Ascending aorta (tissue), 2 donors: ENCODE measurements at regions of chr6 and their contacts with region 1.

Region 1: DNA sequence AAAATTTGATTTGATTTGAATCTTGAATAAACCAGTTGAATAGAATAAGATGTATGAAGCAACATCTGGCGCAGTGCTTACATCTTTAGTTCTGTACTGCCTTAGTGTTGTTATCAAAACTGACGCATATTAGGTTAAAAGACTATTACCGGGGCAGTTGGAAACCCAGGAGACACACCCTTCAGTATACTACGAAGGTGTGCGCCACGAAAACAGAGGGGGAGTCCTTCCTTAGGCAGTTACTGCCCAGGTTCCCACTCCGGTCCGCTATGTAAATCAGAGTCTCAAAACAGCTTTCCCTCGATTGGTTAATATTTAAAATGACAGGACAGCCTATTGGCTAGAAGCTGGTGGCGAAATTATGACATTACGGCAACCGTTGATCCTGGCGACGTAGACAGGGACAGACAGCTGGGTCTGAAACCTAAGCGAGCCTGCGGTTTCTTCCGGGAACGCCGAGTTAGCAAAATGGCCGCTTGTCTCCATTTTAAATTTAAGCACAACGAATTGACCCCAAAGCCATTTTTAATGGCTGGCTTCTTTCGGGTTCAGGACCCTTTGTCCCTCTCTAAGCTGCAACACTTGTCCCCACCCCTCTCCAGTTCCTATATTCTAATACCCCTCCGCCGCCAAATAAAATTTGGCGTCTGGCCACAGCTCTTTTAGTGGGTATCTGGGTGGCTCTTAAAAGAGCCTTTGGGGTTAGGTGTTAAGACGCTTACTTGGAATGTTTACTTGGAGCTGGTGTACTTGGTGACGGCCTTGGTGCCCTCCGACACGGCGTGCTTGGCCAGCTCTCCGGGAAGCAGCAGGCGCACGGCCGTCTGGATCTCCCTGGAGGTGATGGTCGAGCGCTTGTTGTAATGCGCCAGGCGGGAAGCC is 35.8 kb downstream of the HFE start:
- DNase-seq: peak; percentile 88 to 98
- H3K4me3 ChIP-seq: peak overlapping the region; percentile 72 to 95
- H3K27ac ChIP-seq: peak overlapping the region; percentile 90 to 98
- H3K4me1 ChIP-seq: peaks cover 0 to 16% of the 10 kb centered on the region in 2 donors
- H3K27me3 ChIP-seq: no peaks in the 10 kb centered on the region
- CTCF ChIP-seq: no peak

Region 2: GRCh38 chr6:26045065-26045927 is 77.7 kb before region 1 on chr6:
- intact Hi-C with region 1: loop called (anchors 2 kb)
- DNase-seq: peak; percentile 55 to 91
- H3K4me3 ChIP-seq: peak overlapping the region; percentile 67 to 75
- H3K27ac ChIP-seq: peak overlapping the region; percentile 90 to 97
- H3K4me1 ChIP-seq: peaks cover 0 to 8% of the 10 kb centered on the region in 2 donors
- H3K27me3 ChIP-seq: no peaks in the 10 kb centered on the region
- CTCF ChIP-seq: no peak

Region 3: DNA sequence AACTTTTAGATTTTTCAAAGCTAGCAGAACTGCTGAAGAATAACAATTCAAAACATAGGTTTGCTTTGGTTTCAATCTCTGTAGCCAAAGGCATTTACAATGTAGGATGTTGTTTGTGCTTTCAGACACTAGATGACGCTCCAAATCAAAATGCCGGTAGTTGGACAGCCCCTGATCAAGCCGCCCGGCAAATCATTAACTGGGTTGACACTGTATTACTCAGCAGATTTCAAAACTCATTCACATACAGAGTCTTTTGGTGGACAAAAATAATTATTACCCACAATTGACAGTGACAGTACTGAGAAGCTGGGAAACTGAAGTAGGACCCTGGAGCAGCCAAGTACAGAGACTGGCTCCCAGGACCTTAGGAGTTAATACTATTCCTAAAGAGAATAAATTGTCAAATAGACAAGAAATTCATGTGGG is 57.1 kb before region 1 on chr6:
- intact Hi-C with region 1: no loop called
- DNase-seq: peak in 1 of 2 donors; percentile 78
- H3K4me3 ChIP-seq: peak overlapping the region in 1 of 2 donors; percentile 24
- H3K27ac ChIP-seq: no peak overlapping the region
- H3K4me1 ChIP-seq: no peaks in the 10 kb centered on the region
- H3K27me3 ChIP-seq: no peaks in the 10 kb centered on the region
- CTCF ChIP-seq: peak; percentile 83 to 89 (median 87)

Region 4: DNA sequence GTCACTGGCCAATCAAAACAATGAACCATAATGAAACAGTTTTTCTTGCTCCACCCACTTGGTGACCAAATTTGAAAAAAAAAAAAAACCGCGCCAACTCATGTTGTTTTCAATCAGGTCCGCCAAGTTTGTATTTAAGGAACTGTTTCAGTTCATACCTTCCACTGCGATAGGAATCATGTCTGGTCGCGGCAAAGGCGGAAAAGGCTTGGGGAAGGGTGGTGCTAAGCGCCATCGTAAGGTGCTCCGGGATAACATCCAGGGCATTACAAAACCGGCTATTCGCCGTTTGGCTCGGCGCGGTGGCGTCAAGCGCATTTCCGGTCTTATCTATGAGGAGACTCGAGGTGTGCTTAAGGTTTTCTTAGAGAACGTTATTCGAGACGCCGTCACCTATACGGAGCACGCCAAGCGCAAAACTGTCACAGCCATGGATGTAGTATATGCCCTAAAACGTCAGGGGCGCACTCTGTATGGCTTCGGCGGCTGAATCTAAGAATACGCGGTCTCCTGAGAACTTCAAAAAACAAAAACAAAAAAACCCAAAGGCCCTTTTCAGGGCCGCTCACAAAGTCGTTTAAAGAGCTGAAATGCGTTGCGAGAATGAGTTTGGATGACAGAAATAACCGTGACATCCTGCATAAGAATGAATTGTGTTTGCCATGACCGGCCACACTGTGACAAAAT is 19.1 kb before region 1 on chr6:
- intact Hi-C with region 1: loop called (anchors 1 kb)
- DNase-seq: peak; percentile 68 to 94
- H3K4me3 ChIP-seq: peak overlapping the region; percentile 67 to 79
- H3K27ac ChIP-seq: peak overlapping the region; percentile 93 to 95
- H3K4me1 ChIP-seq: peaks cover 0 to 13% of the 10 kb centered on the region in 2 donors
- H3K27me3 ChIP-seq: no peaks in the 10 kb centered on the region
- CTCF ChIP-seq: peak; percentile 13 to 53 (median 51)

Region 5: GRCh38 chr6:26175428-26176181 is 52.6 kb after region 1 on chr6:
- intact Hi-C with region 1: loop called (anchors 5 kb)
- DNase-seq: no peak
- H3K4me3 ChIP-seq: no peak overlapping the region
- H3K27ac ChIP-seq: no peak overlapping the region
- H3K4me1 ChIP-seq: peaks cover 0 to 2% of the 10 kb centered on the region in 2 donors
- H3K27me3 ChIP-seq: no peaks in the 10 kb centered on the region
- CTCF ChIP-seq: peak; percentile 35 to 78 (median 49)

Region 6: DNA sequence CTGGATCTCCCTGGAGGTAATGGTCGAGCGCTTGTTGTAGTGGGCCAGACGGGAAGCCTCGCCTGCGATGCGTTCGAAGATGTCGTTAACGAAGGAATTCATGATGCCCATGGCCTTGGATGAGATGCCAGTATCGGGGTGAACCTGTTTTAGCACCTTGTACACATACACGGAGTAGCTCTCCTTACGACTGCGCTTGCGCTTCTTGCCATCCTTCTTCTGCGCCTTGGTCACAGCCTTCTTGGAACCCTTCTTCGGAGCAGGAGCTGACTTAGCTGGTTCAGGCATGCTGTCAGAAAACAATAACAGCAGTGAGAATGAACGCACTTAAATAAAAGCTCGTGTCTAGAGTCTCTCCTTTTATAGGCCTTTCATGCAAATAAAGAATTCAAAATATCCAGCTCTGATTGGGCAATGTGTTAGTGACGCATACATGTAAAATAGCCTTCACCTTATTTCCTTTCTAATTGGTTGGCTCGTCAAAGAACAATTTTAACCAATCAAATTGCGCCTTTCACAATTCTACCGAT is 93.4 kb after region 1 on chr6:
- intact Hi-C with region 1: loop called (anchors 2 kb)
- DNase-seq: peak in 1 of 2 donors; percentile 89
- H3K4me3 ChIP-seq: peak overlapping the region; percentile 55 to 64
- H3K27ac ChIP-seq: peak overlapping the region; percentile 90
- H3K4me1 ChIP-seq: peaks cover 0 to 11% of the 10 kb centered on the region in 2 donors
- H3K27me3 ChIP-seq: no peaks in the 10 kb centered on the region
- CTCF ChIP-seq: no peak

Region 7: GRCh38 chr6:26473758-26474438 is 350.9 kb after region 1 on chr6:
- intact Hi-C with region 1: no loop called
- DNase-seq: peak; percentile 68 to 92
- H3K4me3 ChIP-seq: peak overlapping the region; percentile 57 to 64
- H3K27ac ChIP-seq: peak overlapping the region; percentile 91
- H3K4me1 ChIP-seq: peaks cover 6 to 9% of the 10 kb centered on the region in 2 donors
- H3K27me3 ChIP-seq: no peaks in the 10 kb centered on the region
- CTCF ChIP-seq: no peak

Region 8: GRCh38 chr6:27146706-27147505 is 1023.9 kb after region 1 on chr6:
- intact Hi-C with region 1: loop called (anchors 10 kb)
- DNase-seq: peak; percentile 40 to 91
- H3K4me3 ChIP-seq: peak overlapping the region; percentile 68 to 85
- H3K27ac ChIP-seq: peak overlapping the region; percentile 93
- H3K4me1 ChIP-seq: no peaks in the 10 kb centered on the region
- H3K27me3 ChIP-seq: no peaks in the 10 kb centered on the region
- CTCF ChIP-seq: no peak